BJ (cell line): ENCODE measurements at regions of chr3 and their contacts with region 1.

Region 1: DNA sequence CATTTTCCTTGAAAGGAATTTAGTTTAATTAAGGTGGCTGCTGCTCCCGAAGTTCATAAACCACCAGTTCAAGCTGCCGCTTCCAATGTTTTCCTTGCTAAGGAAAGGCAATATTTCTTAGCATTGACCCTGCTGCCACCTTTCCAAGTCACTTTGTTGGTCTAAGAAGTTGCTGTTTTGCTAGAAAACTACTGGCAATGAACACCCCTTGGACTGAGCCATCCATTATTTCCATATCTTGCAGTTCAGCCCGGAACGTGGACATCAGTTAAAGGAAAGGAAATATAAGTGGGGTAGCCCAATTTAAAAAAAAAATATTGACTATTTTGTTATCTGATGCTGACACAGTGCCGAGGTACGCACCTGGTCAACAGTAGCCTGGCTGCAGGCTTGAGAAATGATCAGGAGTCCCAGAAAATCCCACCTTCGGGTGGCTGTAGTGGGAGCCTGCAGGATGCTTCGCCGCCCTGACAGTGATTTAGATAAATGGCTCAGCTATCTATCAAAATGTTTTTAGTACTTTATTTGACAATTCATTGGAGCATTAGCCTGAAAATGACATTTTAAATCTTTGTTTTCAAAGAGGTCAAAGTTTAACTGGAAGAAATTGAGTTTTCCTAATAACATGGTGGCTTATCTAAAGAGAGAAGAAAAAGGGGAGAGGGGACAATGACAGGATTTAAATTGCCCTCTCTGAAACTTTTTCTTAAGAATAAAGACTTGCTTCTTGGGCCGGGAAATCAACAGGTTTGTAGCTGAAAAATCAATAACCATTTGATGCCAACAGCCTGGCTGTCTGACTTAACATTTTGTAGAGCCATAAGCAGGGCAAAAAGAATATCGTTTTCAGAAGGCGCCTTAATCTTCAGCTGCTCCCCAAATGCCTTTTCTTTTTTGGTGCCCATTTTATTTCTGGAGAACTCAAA is 1.6 kb downstream of the RARB start:
- DNase-seq: no peak
- H3K4me3 ChIP-seq: peak overlapping the region; percentile 48
- H3K27me3 ChIP-seq: no peaks in the 10 kb centered on the region
- CTCF ChIP-seq: no peak

Region 2: GRCh38 chr3:25143356-25144025 is 286.1 kb before region 1 on chr3:
- CTCF ChIA-PET with region 1: no interaction called
- POLR2A ChIA-PET with region 1: no interaction called
- DNase-seq: no peak
- H3K4me3 ChIP-seq: no peak overlapping the region
- H3K27me3 ChIP-seq: no peaks in the 10 kb centered on the region
- CTCF ChIP-seq: no peak

Region 3: DNA sequence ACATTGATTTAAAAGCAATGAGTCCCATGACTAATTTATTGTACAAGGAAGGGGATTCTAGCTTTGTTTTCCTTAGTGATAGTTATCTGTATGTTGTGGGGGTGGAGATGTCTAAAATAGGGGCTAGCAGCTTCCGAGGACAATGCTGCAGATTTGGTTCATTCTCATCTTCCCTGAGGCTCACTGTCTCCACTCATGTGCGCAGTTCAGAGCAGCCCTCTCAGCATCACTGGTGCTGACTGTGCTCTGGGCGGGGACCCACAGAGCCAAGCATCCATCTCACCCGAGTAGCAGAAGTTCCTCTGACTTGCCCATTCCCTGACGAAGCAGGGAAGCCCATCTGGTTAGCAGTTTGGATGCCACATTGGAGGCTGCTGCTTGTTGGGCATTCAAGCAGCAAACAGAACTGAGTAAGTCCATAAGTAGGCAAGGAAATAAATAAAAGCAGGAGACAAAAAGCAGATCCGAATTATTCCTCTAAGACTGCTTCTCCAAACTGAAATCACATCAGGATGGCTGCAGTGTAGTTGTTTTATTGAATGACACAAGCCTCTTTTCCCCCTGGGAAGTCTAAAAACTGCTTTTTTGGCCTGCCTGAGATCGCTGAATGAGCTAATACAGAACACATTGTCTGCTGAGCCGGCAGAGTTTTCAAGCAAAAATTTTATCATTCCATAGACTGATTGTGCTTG is 26.0 kb after region 1 on chr3:
- CTCF ChIA-PET with region 1: interaction called, 3 read pairs
- POLR2A ChIA-PET with region 1: interaction called, 21 read pairs
- DNase-seq: peak; percentile 50
- H3K4me3 ChIP-seq: no peak overlapping the region
- H3K27me3 ChIP-seq: no peaks in the 10 kb centered on the region
- CTCF ChIP-seq: no peak

Region 4: GRCh38 chr3:25573386-25574171 is 144.0 kb after region 1 on chr3:
- CTCF ChIA-PET with region 1: no interaction called
- POLR2A ChIA-PET with region 1: no interaction called
- DNase-seq: peak; percentile 57
- H3K4me3 ChIP-seq: no peak overlapping the region
- H3K27me3 ChIP-seq: no peaks in the 10 kb centered on the region
- CTCF ChIP-seq: no peak